Dorsolateral prefrontal cortex (tissue), 120 donors: ENCODE measurements at regions of chr2 and their contacts with region 1.

Region 1: DNA sequence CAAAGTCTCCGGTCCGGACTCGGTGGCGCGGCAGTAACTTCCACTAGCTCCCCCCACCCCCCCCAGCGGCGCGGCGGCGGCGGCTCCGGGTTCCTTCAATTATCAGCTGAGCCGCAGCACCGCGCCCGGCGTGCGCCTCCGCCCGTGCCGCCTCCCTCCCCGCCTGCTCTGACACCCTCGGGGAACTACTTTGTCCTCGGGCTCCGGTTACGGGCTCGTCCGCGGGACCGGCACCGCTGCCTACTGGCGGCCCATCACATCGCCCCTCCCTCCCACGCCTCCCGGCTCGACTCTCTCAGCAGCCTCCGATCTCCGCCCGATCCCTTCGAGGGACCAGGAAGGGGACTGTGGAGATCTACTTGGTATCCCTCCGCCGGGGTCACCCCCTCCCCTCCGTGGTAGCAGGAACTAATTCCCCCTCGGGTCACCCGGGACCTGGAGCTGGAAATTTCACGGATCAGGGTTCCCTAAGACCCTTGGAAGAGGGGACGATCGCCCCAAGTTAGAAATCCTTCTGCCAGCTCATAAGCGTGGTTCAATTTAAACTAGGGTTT is at the start of gene TRIP12:
- DNase-seq: peak; percentile 78 to 93 (median 86)
- H3K4me3 ChIP-seq: peak within 1 kb of the TSS; percentile 64 to 97 (median 90)
- H3K27ac ChIP-seq: peak within 1 kb of the TSS; percentile 71 to 99 (median 96)
- H3K27me3 ChIP-seq: no peaks in the 10 kb centered on the region
- CTCF ChIP-seq: peak in 3 of 56 donors; percentile 7 to 20 (median 13)
- total RNA-seq, gene TRIP12: 207 to 293 (median 249) TPM

Region 2: GRCh38 chr2:229780856-229781773 is 140.9 kb before region 1 on chr2:
- intact Hi-C with region 1: loop called (anchors 5 to 10 kb)
- DNase-seq: no peak
- H3K4me3 ChIP-seq: no peak overlapping the region
- H3K27ac ChIP-seq: peak overlapping the region in 51 of 59 donors; percentile 2 to 85 (median 67)
- H3K27me3 ChIP-seq: no peaks in the 10 kb centered on the region
- CTCF ChIP-seq: peak; percentile 76 to 96 (median 88)

Region 3: DNA sequence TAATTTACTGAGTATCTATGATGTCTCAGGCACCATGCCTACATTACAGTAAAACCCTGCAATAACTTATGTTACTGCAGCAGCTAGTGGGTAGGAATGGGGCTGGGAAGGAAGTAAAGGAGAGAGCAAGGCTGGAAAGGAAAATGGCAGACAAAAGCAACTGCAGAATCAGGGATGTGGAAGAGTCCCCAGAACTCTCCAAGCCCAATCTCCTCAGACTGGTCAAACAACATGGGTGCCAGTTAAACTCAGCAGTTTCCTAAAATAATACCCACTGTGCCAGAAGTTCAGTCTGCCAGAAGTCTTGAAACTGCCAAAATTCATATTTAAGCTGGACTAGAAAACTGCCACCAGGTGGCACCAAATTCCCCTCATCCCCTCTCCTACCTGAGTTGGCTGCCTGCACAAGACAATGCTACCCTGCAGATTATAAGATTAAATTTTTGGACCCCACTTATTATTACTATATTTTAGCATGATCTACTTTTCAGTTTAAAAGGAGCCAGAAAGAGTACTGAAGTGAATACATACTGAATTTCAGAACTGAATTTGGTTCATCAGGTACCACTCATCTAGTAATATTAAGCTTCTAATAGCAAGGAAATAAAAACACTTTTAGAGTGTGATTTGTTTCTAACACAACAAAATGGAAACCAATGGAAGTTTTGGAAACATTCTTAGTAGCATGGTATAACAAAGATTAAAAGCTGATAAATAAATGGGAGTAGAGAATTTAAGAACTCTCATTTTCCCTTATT is 120.8 kb before region 1 on chr2:
- intact Hi-C with region 1: loop called in 1 of 2 experiments (anchors 2 kb)
- DNase-seq: peak in 9 of 10 donors; percentile 33 to 70 (median 53)
- H3K4me3 ChIP-seq: no peak overlapping the region
- H3K27ac ChIP-seq: peak overlapping the region in 17 of 59 donors; percentile 1 to 61 (median 20)
- H3K27me3 ChIP-seq: no peaks in the 10 kb centered on the region
- CTCF ChIP-seq: peak; percentile 53 to 88 (median 76)

Region 4: GRCh38 chr2:230068016-230068650 is 146.2 kb after region 1 on chr2:
- intact Hi-C with region 1: loop called in 1 of 2 experiments (anchors 5 kb)
- DNase-seq: peak in 9 of 10 donors; percentile 30 to 77 (median 60)
- H3K4me3 ChIP-seq: peak overlapping the region; percentile 57 to 89 (median 75)
- H3K27ac ChIP-seq: peak overlapping the region in 57 of 59 donors; percentile 64 to 94 (median 89)
- H3K27me3 ChIP-seq: no peaks in the 10 kb centered on the region
- CTCF ChIP-seq: peak in 17 of 56 donors; percentile 3 to 35 (median 17)

Region 5: GRCh38 chr2:230160112-230160660 is 238.2 kb after region 1 on chr2:
- intact Hi-C with region 1: loop called in 1 of 2 experiments (anchors 10 kb)
- DNase-seq: peak in 2 of 10 donors; percentile 12 to 14
- H3K4me3 ChIP-seq: no peak overlapping the region
- H3K27ac ChIP-seq: no peak overlapping the region
- H3K27me3 ChIP-seq: no peaks in the 10 kb centered on the region
- CTCF ChIP-seq: peak; percentile 53 to 89 (median 81)